ENCODE measurements at regions of chr5 and their contacts with region 1.

Region 1: DNA sequence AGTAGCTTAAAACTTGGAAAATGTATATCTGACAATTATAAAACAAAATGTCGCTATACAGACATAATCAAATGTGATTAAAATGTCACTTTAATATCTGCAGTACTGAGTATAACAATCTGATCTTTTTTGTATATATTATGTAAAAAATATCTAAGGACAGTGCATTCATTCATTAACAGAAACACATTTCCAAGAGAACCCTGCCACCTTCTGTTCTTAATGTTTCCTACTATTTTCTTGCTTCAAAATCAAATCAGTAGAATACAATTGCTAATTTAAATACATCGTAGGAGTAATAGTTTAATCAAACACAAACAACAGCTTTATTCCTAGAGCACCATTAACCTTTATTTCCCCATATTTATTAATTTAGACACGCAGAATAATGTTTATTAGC is 142.6 kb upstream of the ST8SIA4 start:
- DNase-seq: no peak
- ATAC-seq: no peak
- H3K4me3 ChIP-seq: no peak overlapping the region
- H3K27ac ChIP-seq: no peak overlapping the region
- H3K4me1 ChIP-seq: no peaks in the 10 kb centered on the region
- H3K27me3 ChIP-seq: no peaks in the 10 kb centered on the region
- CTCF ChIP-seq: peak in 7 of 9 donors; percentile 15 to 58 (median 38)

Region 2: DNA sequence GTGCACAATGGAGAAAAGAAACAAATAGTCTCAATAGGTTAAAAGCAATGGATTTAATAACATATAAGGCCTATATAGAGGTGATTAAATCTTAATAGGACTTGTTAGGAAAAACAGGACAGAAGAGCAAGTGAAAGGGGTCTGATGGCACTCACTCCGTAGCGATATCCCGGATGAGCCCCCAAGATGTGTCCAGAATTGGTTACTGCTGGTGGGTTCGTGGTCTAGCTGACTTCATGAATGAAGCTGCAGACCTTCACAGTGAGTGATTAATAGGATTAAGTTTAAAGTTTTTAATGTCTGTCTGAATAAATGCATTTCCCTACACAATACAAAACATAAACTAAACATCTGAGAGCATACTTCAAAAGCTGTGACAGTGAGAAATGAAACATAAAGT is 620.9 kb before region 1 on chr5:
- intact Hi-C with region 1: loop called in 1 of 10 experiments (anchors 5 kb)
- DNase-seq: no peak
- ATAC-seq: no peak
- H3K4me3 ChIP-seq: no peak overlapping the region
- H3K27ac ChIP-seq: no peak overlapping the region
- H3K4me1 ChIP-seq: no peaks in the 10 kb centered on the region
- H3K27me3 ChIP-seq: no peaks in the 10 kb centered on the region
- CTCF ChIP-seq: no peak

Region 3: GRCh38 chr5:100430268-100431195 is 615.2 kb before region 1 on chr5:
- intact Hi-C with region 1: loop called in 3 of 10 experiments (anchors 5 to 10 kb)
- DNase-seq: peak; percentile 22 to 32
- ATAC-seq: no peak
- H3K4me3 ChIP-seq: no peak overlapping the region
- H3K27ac ChIP-seq: no peak overlapping the region
- H3K4me1 ChIP-seq: no peaks in the 10 kb centered on the region
- H3K27me3 ChIP-seq: no peaks in the 10 kb centered on the region
- CTCF ChIP-seq: peak; percentile 64 to 94 (median 86)

Region 4: GRCh38 chr5:100623719-100624118 is 422.0 kb before region 1 on chr5:
- intact Hi-C with region 1: loop called in 4 of 10 experiments (anchors 5 to 10 kb)
- DNase-seq: no peak
- ATAC-seq: peak in 2 of 8 donors; percentile 42 to 75
- H3K4me3 ChIP-seq: no peak overlapping the region
- H3K27ac ChIP-seq: no peak overlapping the region
- H3K4me1 ChIP-seq: no peaks in the 10 kb centered on the region
- H3K27me3 ChIP-seq: no peaks in the 10 kb centered on the region
- CTCF ChIP-seq: peak; percentile 13 to 71 (median 51)

Region 5: DNA sequence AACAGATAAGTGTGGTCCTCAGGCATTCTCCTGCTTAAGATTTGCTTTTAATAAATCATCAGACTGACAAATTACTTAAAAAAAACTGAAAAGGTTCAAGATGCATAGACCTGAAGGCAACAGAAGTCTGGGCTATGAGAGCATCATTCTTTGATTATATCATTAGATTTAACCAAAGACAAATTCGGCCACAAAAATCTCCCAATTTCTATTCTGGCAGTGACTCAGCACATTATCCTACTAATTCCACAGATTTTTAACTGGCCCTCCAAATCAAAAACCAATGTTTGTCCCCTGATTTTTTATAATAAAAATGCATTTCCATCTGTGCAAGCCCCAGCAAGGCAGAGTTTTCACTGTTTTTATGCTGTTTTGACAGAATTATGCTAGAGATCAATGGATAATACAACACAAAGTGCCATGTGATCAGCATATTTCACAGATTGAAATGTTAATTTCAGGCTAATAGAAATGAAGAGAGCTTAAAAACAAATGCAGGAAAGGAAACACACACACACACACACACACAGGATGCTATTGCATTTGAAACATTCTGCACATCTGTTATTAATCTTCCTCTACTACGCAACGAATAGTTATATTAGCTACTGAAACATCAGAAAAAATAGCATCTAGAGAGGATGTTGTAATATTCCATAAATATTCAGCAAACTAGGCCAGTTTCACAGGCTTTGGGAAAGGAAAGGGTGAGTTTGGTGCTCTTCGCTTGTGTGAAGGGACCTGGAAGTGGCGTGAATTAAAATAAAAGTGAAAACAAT is 35.0 kb after region 1 on chr5:
- intact Hi-C with region 1: no loop called
- DNase-seq: peak in 1 of 2 donors; percentile 30
- ATAC-seq: peak in 4 of 8 donors; percentile 16 to 72 (median 38)
- H3K4me3 ChIP-seq: no peak overlapping the region
- H3K27ac ChIP-seq: peak overlapping the region in 5 of 10 donors; percentile 2 to 38 (median 10)
- H3K4me1 ChIP-seq: peaks cover 0 to 11% (median 4%) of the 10 kb centered on the region in 9 donors
- H3K27me3 ChIP-seq: no peaks in the 10 kb centered on the region
- CTCF ChIP-seq: no peak

Region 6: DNA sequence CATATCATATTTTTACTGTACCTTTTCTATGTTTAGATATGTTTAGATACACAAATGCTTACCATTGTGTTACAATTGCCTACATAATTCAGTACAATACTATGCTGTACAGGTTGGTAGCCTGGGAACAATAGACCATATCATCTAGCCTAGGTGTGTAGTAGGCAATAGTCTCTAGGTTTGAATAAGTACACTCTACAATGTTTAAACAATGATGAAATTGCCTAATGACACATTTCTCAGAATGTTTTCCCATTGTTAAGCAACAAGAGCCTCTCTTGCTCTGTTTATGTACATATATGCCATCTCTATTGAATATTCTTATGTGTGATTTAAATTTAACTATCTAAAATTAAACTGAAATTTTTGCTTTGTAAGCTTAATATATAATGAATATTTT is 67.0 kb after region 1 on chr5:
- intact Hi-C with region 1: no loop called
- DNase-seq: no peak
- ATAC-seq: no peak
- H3K4me3 ChIP-seq: no peak overlapping the region
- H3K27ac ChIP-seq: no peak overlapping the region
- H3K4me1 ChIP-seq: no peaks in the 10 kb centered on the region
- H3K27me3 ChIP-seq: no peaks in the 10 kb centered on the region
- CTCF ChIP-seq: no peak

Measured in heart right ventricle (tissue), 16 donors.